ENCODE measurements at regions of chr12 and their contacts with region 1.

Region 1: GRCh38 chr12:879641-880040 is 69.9 kb downstream of the RAD52 start:
- DNase-seq: peak in 1 of 2 donors; percentile 75
- ATAC-seq: peak; percentile 42 to 90
- H3K4me3 ChIP-seq: no peak overlapping the region
- H3K27ac ChIP-seq: peak overlapping the region in 2 of 4 donors; percentile 36 to 48
- H3K4me1 ChIP-seq: no peaks in the 10 kb centered on the region
- H3K27me3 ChIP-seq: no peaks in the 10 kb centered on the region
- CTCF ChIP-seq: no peak
- POLR2A ChIP-seq: no peak

Region 2: DNA sequence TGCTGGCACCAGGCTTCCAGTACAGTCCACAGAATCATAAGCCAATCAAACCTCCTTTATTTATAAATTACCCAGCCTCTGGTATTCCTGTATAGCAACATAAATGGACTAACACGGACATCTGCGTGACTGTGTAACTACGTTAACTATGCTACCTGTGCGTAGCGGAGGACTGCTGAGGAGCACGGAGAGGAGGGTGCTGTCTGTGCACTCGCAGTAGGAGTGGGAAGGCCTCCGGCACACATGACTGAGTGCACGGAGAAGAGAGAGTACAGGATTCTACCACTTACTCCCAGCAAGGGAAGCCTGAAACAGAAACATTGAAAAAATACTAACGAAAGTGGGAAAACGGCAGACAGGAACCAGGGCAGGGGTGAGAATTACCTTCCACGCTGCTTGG is 47.0 kb after region 1 on chr12:
- in situ Hi-C with region 1: no loop called
- intact Hi-C with region 1: loop called (anchors 5 kb)
- DNase-seq: no peak
- ATAC-seq: no peak
- H3K4me3 ChIP-seq: no peak overlapping the region
- H3K27ac ChIP-seq: no peak overlapping the region
- H3K4me1 ChIP-seq: no peaks in the 10 kb centered on the region
- H3K27me3 ChIP-seq: no peaks in the 10 kb centered on the region
- CTCF ChIP-seq: no peak
- POLR2A ChIP-seq: no peak

Measured in gastrocnemius medialis (tissue), 4 donors.